Activated CD4-positive, alpha-beta T cell treated with anti-CD3 and anti-CD28 coated beads, Interleukin-2, amount 10 ng/mL, durations not matched to agents 24 days and 14 days (primary cell): ENCODE measurements at regions of chr11 and their contacts with region 1.

Region 1: GRCh38 chr11:75022759-75023396 is 34.1 kb downstream of the NEU3 start:
- DNase-seq: peak; percentile 93
- H3K4me3 Mint-ChIP-seq: no peak overlapping the region
- H3K27ac Mint-ChIP-seq: no peak overlapping the region
- H3K4me1 Mint-ChIP-seq: peaks cover 2% of the 10 kb centered on the region
- H3K27me3 Mint-ChIP-seq: no peaks in the 10 kb centered on the region

Region 2: DNA sequence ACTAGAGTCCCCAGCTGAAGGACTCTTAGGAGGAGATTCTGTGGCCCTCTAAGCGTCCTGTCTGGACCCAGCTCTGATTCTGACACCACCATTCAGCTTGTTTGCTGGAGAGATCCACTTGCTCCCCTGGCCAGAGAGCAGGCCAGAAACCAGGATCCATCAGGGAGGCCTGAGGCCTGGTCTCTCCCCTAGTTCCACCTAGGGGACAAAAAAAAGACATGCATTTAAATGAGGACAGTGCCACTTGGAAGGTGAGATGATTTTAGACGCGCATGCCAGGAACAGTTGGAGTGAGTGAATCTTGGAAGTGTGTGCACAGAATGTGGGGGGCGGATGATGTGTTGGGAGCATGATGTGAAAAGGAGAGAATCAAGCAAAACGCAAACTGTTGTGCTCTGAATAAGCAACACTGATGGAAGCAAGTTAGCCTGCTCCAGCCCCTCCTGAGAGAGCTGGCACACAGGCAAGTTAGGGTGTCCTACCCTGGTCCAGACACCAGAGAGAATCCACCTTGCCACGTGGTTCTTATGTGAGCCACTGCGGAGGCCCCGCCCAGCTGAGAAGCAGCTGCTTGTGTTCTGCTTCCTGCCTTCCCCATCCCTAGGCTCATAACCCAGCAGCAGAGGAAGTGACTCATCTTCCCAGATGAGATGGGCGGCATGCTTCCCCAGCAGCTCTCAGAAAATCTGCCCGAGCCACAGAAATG is 120.0 kb after region 1 on chr11:
- intact Hi-C with region 1: loop called (anchors 5 kb)
- DNase-seq: peak; percentile 93
- H3K4me3 Mint-ChIP-seq: peak overlapping the region; percentile 74
- H3K27ac Mint-ChIP-seq: peak overlapping the region; percentile 90
- H3K4me1 Mint-ChIP-seq: peaks cover 45% of the 10 kb centered on the region
- H3K27me3 Mint-ChIP-seq: peaks cover 9% of the 10 kb centered on the region

Region 3: DNA sequence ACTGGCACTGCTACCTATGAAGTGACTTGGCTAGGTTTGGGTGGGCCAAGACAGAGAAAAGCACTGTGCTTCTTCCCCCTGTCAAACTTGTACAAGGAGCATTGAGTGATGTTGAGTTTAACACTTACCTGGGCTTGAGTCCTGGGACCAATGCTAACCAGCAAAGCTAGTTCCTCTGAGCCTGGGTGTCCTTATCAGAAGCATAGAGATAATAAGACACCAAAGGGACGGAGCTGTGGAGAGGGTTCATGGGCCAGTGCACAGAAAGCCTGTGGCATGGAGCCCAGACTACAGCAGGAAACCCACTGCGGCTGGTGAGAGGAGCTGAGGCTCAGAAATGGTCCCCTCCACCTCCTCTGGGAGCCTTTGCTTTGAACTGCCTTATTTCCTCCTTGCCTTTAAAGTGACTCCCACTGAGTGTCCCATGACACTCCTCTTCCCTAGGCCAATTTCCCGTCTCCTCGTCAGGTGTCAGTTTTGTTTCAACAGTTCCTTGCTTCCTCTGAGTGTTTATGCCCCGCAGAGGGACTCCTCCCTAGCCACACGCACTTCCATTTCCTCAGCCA is 137.4 kb after region 1 on chr11:
- intact Hi-C with region 1: no loop called
- DNase-seq: no peak
- H3K4me3 Mint-ChIP-seq: no peak overlapping the region
- H3K27ac Mint-ChIP-seq: no peak overlapping the region
- H3K4me1 Mint-ChIP-seq: peaks cover 15% of the 10 kb centered on the region
- H3K27me3 Mint-ChIP-seq: peaks cover 7% of the 10 kb centered on the region

Region 4: DNA sequence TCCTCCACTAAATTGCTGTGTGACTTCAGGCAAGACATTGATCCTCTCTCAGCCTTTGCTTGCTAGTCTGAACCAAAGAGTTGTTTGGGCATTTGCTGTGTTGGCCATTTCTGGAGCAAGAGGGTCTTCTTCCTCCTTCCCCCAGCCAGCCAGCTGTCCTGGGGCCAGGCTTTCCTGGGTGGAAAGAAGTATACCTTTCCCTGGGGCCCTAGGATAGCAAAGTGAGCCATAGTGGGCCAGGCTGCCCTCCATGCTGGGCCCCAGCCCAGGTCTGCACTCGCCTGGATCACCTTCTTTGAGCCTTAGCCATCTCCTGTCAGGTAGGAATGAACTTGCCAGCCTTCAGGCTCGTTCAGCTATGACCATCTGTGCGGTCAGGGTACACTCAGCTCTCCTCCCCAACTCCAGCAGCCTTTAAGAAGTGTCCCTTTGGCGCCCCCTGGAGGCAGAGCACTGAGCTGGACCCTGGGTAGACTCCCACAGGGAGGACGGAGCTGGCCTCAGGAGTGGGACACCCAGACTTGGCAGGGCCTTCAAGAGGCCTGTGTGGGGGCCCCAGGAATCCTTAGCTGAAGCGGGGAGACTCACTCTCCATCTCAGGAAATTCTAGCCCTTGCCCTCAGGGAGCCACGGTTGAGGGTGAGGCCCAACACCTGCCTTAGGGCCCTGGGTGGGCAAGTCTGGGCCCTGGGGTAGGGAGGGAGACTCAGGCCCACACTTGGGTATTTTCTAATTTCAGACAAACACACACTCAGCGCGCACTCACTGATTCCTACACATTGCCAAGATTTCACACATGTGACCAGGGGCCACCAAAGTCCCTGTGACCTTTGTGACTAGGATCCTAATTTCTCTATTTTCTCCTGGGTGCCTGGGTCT is 182.0 kb after region 1 on chr11:
- intact Hi-C with region 1: loop called (anchors 1 kb)
- DNase-seq: peak; percentile 95
- H3K4me3 Mint-ChIP-seq: no peak overlapping the region
- H3K27ac Mint-ChIP-seq: no peak overlapping the region
- H3K4me1 Mint-ChIP-seq: no peaks in the 10 kb centered on the region
- H3K27me3 Mint-ChIP-seq: peaks cover 12% of the 10 kb centered on the region

Region 5: GRCh38 chr11:75248690-75249268 is 225.9 kb after region 1 on chr11:
- intact Hi-C with region 1: loop called (anchors 1 kb)
- DNase-seq: peak; percentile 96
- H3K4me3 Mint-ChIP-seq: no peak overlapping the region
- H3K27ac Mint-ChIP-seq: no peak overlapping the region
- H3K4me1 Mint-ChIP-seq: peaks cover 3% of the 10 kb centered on the region
- H3K27me3 Mint-ChIP-seq: peaks cover 31% of the 10 kb centered on the region